ENCODE measurements at regions of chr3 and their contacts with region 1.

Region 1: DNA sequence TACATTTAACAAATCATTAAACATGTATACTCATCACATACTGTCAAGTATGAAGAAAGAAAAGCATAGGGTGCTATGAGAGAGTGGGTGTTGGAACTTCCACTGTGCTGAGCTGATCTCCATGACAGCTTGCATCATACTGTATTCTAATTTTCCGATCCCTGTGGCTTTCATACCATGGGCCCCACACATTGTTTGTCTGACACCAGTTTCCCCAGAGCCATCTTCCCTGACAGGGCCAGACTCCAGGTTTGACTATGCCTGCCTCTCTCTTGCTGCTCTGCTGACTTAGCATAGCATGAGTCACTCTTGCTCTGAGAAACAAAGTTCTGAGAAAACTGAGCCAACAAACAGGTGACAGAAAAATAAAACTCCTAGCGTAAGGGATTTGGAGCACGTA is 37.0 kb upstream of the CASR start:
- DNase-seq: peak; percentile 90
- H3K4me3 Mint-ChIP-seq: no peak overlapping the region
- H3K27ac Mint-ChIP-seq: peak overlapping the region; percentile 87
- H3K4me1 Mint-ChIP-seq: peaks cover 34% of the 10 kb centered on the region
- H3K27me3 Mint-ChIP-seq: peaks cover 3% of the 10 kb centered on the region

Region 2: GRCh38 chr3:121243208-121243607 is 903.3 kb before region 1 on chr3:
- CTCF ChIA-PET with region 1: no interaction called
- POLR2A ChIA-PET with region 1: no interaction called
- intact Hi-C with region 1: no loop called
- DNase-seq: no peak
- H3K4me3 Mint-ChIP-seq: no peak overlapping the region
- H3K27ac Mint-ChIP-seq: no peak overlapping the region
- H3K4me1 Mint-ChIP-seq: no peaks in the 10 kb centered on the region
- H3K27me3 Mint-ChIP-seq: no peaks in the 10 kb centered on the region

Region 3: GRCh38 chr3:121545574-121546455 is 600.7 kb before region 1 on chr3 and contains the start of gene POLQ:
- CTCF ChIA-PET with region 1: no interaction called
- POLR2A ChIA-PET with region 1: no interaction called
- intact Hi-C with region 1: loop called (anchors 1 kb)
- DNase-seq: peak; percentile 93
- H3K4me3 Mint-ChIP-seq: peak within 1 kb of the TSS; percentile 86
- H3K27ac Mint-ChIP-seq: peak within 1 kb of the TSS; percentile 92
- H3K4me1 Mint-ChIP-seq: peaks cover 6% of the 10 kb centered on the region
- H3K27me3 Mint-ChIP-seq: no peaks in the 10 kb centered on the region
- total RNA-seq, gene POLQ: 23.9 to 25.1 TPM

Region 4: GRCh38 chr3:121592856-121593702 is 553.4 kb before region 1 on chr3 and contains the start of gene FBXO40:
- CTCF ChIA-PET with region 1: no interaction called
- POLR2A ChIA-PET with region 1: no interaction called
- intact Hi-C with region 1: no loop called
- DNase-seq: no peak
- H3K4me3 Mint-ChIP-seq: no peak within 1 kb of the TSS
- H3K27ac Mint-ChIP-seq: no peak within 1 kb of the TSS
- H3K4me1 Mint-ChIP-seq: no peaks in the 10 kb centered on the region
- H3K27me3 Mint-ChIP-seq: no peaks in the 10 kb centered on the region
- total RNA-seq, gene FBXO40: not detected

Region 5: GRCh38 chr3:121883507-121883906 is 263.0 kb before region 1 on chr3:
- CTCF ChIA-PET with region 1: no interaction called
- POLR2A ChIA-PET with region 1: no interaction called
- intact Hi-C with region 1: loop called (anchors 1 kb)
- DNase-seq: no peak
- H3K4me3 Mint-ChIP-seq: no peak overlapping the region
- H3K27ac Mint-ChIP-seq: no peak overlapping the region
- H3K4me1 Mint-ChIP-seq: peaks cover 2% of the 10 kb centered on the region
- H3K27me3 Mint-ChIP-seq: no peaks in the 10 kb centered on the region

Region 6: GRCh38 chr3:122200661-122201060 is 54.2 kb after region 1 on chr3:
- CTCF ChIA-PET with region 1: no interaction called
- POLR2A ChIA-PET with region 1: no interaction called
- intact Hi-C with region 1: no loop called
- DNase-seq: no peak
- H3K4me3 Mint-ChIP-seq: no peak overlapping the region
- H3K27ac Mint-ChIP-seq: no peak overlapping the region
- H3K4me1 Mint-ChIP-seq: peaks cover 3% of the 10 kb centered on the region
- H3K27me3 Mint-ChIP-seq: peaks cover 2% of the 10 kb centered on the region

Region 7: GRCh38 chr3:122233101-122233952 is 86.9 kb after region 1 on chr3:
- CTCF ChIA-PET with region 1: no interaction called
- POLR2A ChIA-PET with region 1: interaction called, 3 read pairs
- intact Hi-C with region 1: loop called (anchors 2 kb)
- DNase-seq: peak; percentile 44
- H3K4me3 Mint-ChIP-seq: no peak overlapping the region
- H3K27ac Mint-ChIP-seq: no peak overlapping the region
- H3K4me1 Mint-ChIP-seq: peaks cover 28% of the 10 kb centered on the region
- H3K27me3 Mint-ChIP-seq: peaks cover 5% of the 10 kb centered on the region

Region 8: DNA sequence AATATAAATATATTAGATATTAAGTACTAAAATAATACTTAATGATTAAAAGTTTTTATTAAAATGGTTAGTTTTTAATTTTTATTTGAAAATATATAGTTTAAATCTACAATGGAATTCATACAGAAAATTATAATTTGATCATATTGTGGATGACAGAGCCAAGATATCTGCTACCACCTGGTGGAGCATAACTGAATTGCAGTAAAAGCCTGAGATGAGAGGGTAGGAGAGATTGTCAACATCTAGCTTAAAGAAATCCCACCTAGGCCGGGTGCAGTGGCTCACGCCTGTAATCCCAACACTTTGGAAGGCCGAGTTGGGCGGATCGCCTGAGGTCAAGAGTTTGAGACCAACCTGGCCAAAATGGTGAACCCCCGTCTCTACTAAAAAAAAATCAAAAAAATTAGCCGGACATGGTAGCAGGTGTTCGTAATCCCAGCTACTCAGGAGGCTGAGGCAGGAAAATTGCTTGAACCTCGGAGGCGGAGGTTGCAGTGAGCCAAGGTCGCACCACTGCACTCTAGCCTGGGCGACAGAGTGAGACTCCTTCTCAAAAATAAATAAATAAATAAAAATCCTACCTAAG is 153.5 kb after region 1 on chr3:
- CTCF ChIA-PET with region 1: interaction called, 4 read pairs
- POLR2A ChIA-PET with region 1: interaction called, 3 read pairs
- intact Hi-C with region 1: loop called (anchors 2 kb)
- DNase-seq: no peak
- H3K4me3 Mint-ChIP-seq: no peak overlapping the region
- H3K27ac Mint-ChIP-seq: no peak overlapping the region
- H3K4me1 Mint-ChIP-seq: peaks cover 18% of the 10 kb centered on the region
- H3K27me3 Mint-ChIP-seq: no peaks in the 10 kb centered on the region

Region 9: DNA sequence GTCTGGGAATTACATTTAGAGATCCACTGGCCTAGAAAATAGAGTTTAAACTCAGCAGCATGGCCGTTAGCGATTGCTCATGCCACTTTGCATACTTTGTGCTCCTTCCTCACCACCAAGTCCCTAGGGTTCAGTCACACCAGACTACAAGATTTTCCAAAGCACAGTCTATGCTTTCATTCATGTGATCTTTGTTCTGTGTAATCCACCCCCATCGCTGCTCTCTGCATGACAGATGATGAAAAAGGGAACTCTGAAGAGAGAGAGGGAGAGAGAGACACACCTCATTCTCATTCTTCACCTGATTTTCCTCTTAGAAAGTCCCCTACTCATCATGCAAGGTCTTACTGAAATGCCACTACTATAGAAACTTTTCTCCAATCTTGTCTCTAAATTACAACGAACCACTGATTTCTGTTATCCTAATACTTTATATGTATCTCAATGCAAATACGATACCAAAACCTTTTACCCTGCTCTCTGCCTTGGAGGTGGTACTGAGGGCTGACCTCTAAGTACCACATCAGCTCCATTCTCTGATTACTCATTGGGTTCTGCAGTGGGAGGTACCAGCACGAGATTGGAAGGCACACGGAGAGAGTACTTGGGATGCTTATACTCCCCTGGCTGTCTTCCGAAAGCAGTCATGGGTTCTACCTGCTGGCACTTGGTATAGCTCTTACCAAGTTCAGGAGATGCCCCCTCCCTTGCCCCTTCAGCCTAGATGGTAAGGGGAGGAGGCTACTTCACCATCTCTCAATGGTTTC is 429.9 kb after region 1 on chr3:
- CTCF ChIA-PET with region 1: no interaction called
- POLR2A ChIA-PET with region 1: no interaction called
- intact Hi-C with region 1: loop called (anchors 5 kb)
- DNase-seq: peak; percentile 70
- H3K4me3 Mint-ChIP-seq: peak overlapping the region; percentile 35
- H3K27ac Mint-ChIP-seq: peak overlapping the region; percentile 82
- H3K4me1 Mint-ChIP-seq: peaks cover 61% of the 10 kb centered on the region
- H3K27me3 Mint-ChIP-seq: no peaks in the 10 kb centered on the region